ENCODE measurements at regions of chr15 and their contacts with region 1.

Region 1: DNA sequence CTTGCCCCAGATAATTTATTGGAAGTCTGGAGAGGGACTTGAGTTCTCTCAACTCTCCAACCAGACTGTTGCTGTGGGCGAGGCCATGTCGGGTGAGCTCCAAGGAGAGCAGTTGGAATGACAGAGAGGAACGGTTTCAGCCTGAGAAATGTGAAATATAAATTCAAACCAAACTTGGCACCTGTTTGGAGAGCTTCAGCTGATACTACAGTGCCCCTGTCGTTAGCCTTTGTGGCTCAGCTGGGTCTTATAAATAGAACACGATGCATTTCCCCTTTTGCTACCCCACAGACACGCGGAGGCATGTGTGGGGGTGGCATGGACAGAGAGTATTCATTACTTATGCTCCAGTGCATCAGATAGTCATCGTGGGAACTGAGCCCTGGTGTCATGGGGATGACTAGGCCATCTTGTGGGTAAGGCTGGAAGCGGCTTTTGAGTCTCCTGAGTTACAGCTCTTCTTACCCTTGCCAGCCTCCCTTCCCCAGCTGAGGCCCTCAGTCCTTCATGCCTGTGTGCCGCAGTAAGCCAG is 15.6 kb downstream of the SMAD3 start:
- DNase-seq: no peak
- H3K4me3 ChIP-seq: peak overlapping the region in 3 of 4 donors; percentile 3 to 19 (median 6)
- H3K27ac ChIP-seq: peak overlapping the region; percentile 60 to 78 (median 70)
- H3K4me1 ChIP-seq: peaks cover 73 to 97% (median 94%) of the 10 kb centered on the region in 4 donors
- H3K27me3 ChIP-seq: no peaks in the 10 kb centered on the region
- CTCF ChIP-seq: no peak
- EP300 ChIP-seq: no peak
- POLR2A ChIP-seq: no peak

Region 2: GRCh38 chr15:67303490-67304363 is 222.8 kb after region 1 on chr15:
- intact Hi-C with region 1: loop called (anchors 10 kb)
- DNase-seq: no peak
- H3K4me3 ChIP-seq: no peak overlapping the region
- H3K27ac ChIP-seq: no peak overlapping the region
- H3K4me1 ChIP-seq: peaks cover 0 to 14% (median 12%) of the 10 kb centered on the region in 4 donors
- H3K27me3 ChIP-seq: no peaks in the 10 kb centered on the region
- CTCF ChIP-seq: peak; percentile 43 to 57 (median 51)
- EP300 ChIP-seq: no peak
- POLR2A ChIP-seq: no peak

Region 3: DNA sequence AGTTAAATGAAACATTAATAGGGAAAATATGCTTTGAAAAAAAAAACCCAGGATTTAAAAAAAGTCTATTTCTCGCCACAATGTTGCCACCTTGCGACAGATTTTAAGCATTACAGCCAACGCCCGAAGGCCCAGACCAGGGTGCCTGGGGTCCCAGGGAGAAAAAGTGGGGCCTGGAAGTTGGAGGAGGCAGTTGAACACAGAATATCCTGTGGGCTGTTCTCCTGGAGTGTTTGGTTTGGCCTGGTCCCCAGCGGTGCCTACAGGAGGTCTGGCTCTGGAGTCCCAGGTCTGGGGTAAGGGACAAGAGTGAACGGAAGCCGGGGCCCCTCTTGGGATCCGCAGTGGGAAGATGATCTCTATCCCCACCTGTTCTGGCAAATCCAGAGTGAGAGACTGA is 755.5 kb after region 1 on chr15:
- intact Hi-C with region 1: no loop called
- DNase-seq: no peak
- H3K4me3 ChIP-seq: peak overlapping the region; percentile 44 to 54 (median 46)
- H3K27ac ChIP-seq: no peak overlapping the region
- H3K4me1 ChIP-seq: peaks cover 56 to 67% (median 64%) of the 10 kb centered on the region in 4 donors
- H3K27me3 ChIP-seq: peaks cover 15 to 48% (median 46%) of the 10 kb centered on the region in 4 donors
- CTCF ChIP-seq: peak; percentile 74 to 88 (median 85)
- EP300 ChIP-seq: no peak
- POLR2A ChIP-seq: no peak

Measured in esophagus muscularis mucosa (tissue), 4 donors.